Activated T-helper 1 cell treated with anti-CD3 and anti-CD28 coated beads, Interleukin-12 subunit alpha, Interleukin-12 subunit beta, Interleukin-2, Interleukin-4 antibody, amounts not matched to agents 30 ng/mL and 10 ng/mL and 1 ng/mL, durations not matched to agents 14 hours and 24 hours and 36 hours (primary cell): ENCODE measurements at regions of chr7 and their contacts with region 1.

Region 1: GRCh38 chr7:2109936-2110585 is 122.7 kb downstream of the MAD1L1 start:
- DNase-seq: peak; percentile 12
- H3K4me3 Mint-ChIP-seq: peak overlapping the region; percentile 50
- H3K27ac Mint-ChIP-seq: peak overlapping the region; percentile 3
- H3K4me1 Mint-ChIP-seq: peaks cover 36% of the 10 kb centered on the region
- H3K27me3 Mint-ChIP-seq: no peaks in the 10 kb centered on the region

Region 2: DNA sequence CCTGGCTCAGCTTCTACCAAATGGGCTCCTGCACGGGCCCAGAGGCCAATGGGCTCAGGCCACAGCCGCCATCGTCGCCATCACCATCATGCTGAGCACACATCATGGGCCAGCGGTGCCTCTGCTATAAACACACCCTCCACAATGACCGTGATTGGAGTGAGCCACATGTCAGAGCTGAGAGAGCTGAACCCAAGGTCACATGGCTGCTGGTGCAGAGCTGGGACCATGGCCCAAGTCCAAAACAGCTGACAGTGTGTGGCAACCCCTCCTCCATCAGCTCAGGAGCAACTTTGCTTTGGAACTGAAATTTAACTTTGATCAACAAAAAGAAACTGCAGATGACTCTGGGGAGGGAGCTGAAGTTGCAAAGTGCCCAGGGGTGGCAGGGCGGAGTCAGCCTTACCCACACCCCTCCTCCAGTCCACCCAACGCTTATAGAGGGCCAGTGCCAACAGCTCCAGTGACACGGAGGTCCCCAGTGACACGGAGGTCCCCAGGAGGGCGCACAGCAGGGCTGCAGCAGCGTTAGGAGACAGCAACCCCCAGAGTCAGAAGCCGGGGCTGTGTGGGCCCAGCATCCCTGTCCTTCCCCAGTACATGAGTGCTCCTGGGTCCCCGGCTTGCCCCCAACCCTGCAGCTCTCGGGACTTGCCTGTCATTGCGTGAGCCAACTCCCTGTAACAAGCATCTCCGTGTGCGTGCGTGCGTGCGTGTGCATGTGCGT is 190.4 kb before region 1 on chr7:
- intact Hi-C with region 1: loop called (anchors 5 kb)
- DNase-seq: no peak
- H3K4me3 Mint-ChIP-seq: peak overlapping the region; percentile 72
- H3K27ac Mint-ChIP-seq: no peak overlapping the region
- H3K4me1 Mint-ChIP-seq: peaks cover 42% of the 10 kb centered on the region
- H3K27me3 Mint-ChIP-seq: peaks cover 27% of the 10 kb centered on the region

Region 3: DNA sequence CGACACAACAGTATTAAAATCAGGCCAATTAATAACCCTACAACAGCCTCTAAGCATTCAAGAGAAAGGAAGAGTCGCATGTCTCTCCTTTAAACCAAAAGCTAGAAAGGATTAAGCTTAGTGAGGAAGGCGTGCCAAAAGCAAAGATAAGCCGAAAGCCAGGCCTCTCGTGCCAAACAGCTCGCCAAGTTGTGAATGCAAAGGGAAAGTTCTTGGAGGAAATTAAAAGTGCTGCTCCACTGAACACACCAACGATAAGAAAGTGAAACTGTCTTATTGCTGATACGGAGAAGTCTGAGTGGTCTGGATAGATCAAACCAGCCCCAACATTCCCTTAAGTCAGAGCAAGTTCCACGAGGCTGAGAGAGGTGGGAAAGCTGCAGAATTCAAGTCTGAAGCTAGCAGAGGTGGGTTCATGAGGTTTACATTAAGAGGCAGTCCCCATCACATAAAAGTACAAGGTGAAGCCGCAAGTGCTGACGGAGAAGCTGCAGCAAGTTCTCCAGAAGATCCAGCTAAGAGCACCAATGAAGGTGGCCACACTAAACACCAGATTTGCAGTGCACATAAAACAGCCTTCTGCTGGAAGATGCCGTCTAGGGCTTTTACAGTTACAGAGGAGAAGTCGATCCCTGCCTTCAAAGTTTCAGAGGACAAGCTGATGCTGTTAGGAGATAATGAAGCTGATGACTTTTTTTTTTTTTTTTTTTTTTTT is 72.1 kb before region 1 on chr7:
- intact Hi-C with region 1: loop called (anchors 5 kb)
- DNase-seq: no peak
- H3K4me3 Mint-ChIP-seq: peak overlapping the region; percentile 83
- H3K27ac Mint-ChIP-seq: peak overlapping the region; percentile 24
- H3K4me1 Mint-ChIP-seq: peaks cover 42% of the 10 kb centered on the region
- H3K27me3 Mint-ChIP-seq: no peaks in the 10 kb centered on the region

Region 4: DNA sequence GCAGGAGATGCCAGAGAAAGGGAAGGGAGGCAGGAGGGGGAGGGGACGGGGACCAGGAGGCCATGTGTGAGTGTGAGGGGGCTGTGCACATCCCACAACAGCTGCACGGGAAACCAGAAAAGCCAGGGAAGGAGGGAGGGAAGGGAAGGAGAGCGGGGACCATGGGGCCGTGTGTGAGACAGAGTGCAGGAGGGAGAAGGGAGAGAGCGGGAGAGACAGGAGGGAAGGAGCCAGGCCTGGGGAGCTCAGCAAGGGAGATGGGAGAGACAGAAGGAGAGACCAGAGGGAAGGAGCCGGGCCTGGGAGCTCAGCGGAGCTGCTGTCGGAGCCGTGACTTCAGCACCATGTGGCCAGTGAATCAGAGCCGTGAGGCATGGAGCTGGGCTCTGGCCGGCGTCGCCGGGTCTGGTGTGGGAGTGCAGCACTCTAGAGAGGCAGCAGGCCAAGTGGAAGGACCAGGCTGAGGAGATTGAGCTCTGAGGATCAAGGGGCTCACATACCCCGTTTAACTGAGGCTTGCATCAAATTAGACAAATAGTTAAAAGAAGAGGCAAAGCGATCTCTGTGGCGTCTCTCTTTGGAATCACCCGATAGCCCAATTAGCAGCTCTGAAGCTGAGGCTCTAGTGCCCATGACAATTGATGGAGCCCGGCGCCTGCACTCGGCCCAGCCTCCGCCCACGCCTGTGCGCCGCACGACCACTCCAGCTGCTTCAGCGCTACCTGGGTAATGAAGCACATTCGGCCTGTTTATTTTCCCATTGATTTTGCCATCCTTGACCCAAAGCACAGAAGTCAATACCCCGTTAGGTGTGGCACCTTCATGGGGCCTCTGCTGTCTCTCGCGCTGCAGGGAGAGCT is 27.7 kb before region 1 on chr7:
- intact Hi-C with region 1: no loop called
- DNase-seq: no peak
- H3K4me3 Mint-ChIP-seq: no peak overlapping the region
- H3K27ac Mint-ChIP-seq: no peak overlapping the region
- H3K4me1 Mint-ChIP-seq: peaks cover 13% of the 10 kb centered on the region
- H3K27me3 Mint-ChIP-seq: no peaks in the 10 kb centered on the region

Region 5: GRCh38 chr7:2232766-2233520 is 122.9 kb after region 1 on chr7 and contains the start of gene MAD1L1:
- intact Hi-C with region 1: loop called (anchors 5 kb)
- DNase-seq: peak; percentile 88
- H3K4me3 Mint-ChIP-seq: peak within 1 kb of the TSS; percentile 96
- H3K27ac Mint-ChIP-seq: peak within 1 kb of the TSS; percentile 83
- H3K4me1 Mint-ChIP-seq: peaks cover 26% of the 10 kb centered on the region
- H3K27me3 Mint-ChIP-seq: no peaks in the 10 kb centered on the region
- total RNA-seq, gene MAD1L1: 56.2 and 56.4 TPM in 2 replicates